ENCODE measurements at regions of chr3 and their contacts with region 1.

Region 1: DNA sequence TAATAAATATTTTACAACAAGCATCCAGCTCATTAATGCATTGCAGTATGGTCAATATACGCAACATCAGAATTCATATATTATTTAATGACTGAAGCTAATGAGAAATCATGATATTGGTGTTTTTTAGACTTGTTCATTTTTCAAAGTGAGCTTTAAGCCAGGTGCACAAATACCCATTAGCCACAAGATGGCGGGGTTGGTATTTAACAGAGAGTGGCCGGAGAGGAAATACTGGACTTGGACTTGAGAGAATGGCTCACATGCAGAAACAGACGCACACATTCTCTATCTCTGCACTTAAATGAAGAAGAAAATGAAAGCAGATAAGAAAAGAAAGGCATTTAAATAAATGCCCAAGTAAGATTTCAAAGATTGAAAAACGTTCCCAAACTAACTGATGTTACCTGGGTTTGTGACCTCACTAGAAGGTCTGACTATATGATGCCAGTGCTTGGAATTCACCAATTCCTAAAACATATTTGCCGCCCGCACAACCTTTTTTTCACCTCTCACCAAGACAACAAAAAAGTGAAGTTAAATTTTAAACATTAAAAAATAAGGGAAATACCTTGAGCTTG is 21.2 kb upstream of the CRBN start:
- DNase-seq: peak in 5 of 14 experiments; percentile 10 to 64 (median 44)
- ATAC-seq: no peak
- H3K4me3 ChIP-seq: no peak overlapping the region
- H3K4me3 Mint-ChIP-seq: no peak overlapping the region
- H3K27ac ChIP-seq: no peak overlapping the region
- H3K27ac Mint-ChIP-seq: no peak overlapping the region
- H3K4me1 ChIP-seq: peaks cover 12% of the 10 kb centered on the region
- H3K4me1 Mint-ChIP-seq: peaks cover 20% of the 10 kb centered on the region
- H3K27me3 ChIP-seq: no peaks in the 10 kb centered on the region
- H3K27me3 Mint-ChIP-seq: no peaks in the 10 kb centered on the region
- CTCF ChIP-seq: peak; percentile 87

Region 2: DNA sequence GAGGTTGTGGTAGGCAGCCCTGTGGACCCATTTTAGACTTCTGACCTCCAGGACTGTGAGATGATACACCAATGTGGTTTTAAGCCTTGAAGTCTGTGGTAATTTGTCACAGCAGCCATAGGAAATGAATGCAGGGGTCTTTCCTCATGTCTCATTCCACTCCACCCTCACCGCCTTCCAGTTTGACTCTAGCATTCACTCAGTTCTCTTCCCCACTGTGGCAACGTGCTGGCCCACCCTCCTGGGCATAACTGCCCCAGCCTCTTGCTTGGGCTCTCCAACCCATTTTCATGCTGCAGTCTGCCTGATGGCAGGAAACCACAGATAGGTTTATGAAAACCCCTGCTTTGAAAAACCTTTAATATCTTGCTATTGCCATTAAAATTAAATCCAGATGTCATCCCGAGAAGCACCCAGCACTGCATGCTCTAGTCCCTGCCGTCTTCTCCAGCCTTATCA is 81.3 kb before region 1 on chr3:
- CTCF ChIA-PET with region 1: no interaction called
- POLR2A ChIA-PET with region 1: no interaction called
- intact Hi-C with region 1: no loop called
- DNase-seq: no peak
- ATAC-seq: no peak
- H3K4me3 ChIP-seq: no peak overlapping the region
- H3K4me3 Mint-ChIP-seq: no peak overlapping the region
- H3K27ac ChIP-seq: no peak overlapping the region
- H3K27ac Mint-ChIP-seq: no peak overlapping the region
- H3K4me1 ChIP-seq: no peaks in the 10 kb centered on the region
- H3K4me1 Mint-ChIP-seq: no peaks in the 10 kb centered on the region
- H3K27me3 ChIP-seq: no peaks in the 10 kb centered on the region
- H3K27me3 Mint-ChIP-seq: no peaks in the 10 kb centered on the region
- CTCF ChIP-seq: no peak

Region 3: GRCh38 chr3:3998140-3998922 is 797.6 kb after region 1 on chr3:
- CTCF ChIA-PET with region 1: no interaction called
- POLR2A ChIA-PET with region 1: interaction called, 4 read pairs
- intact Hi-C with region 1: loop called in 1 of 2 experiments (anchors 5 kb)
- DNase-seq: peak in 4 of 14 experiments; percentile 1 to 36 (median 23)
- ATAC-seq: no peak
- H3K4me3 ChIP-seq: no peak overlapping the region
- H3K4me3 Mint-ChIP-seq: no peak overlapping the region
- H3K27ac ChIP-seq: no peak overlapping the region
- H3K27ac Mint-ChIP-seq: no peak overlapping the region
- H3K4me1 ChIP-seq: no peaks in the 10 kb centered on the region
- H3K4me1 Mint-ChIP-seq: no peaks in the 10 kb centered on the region
- H3K27me3 ChIP-seq: no peaks in the 10 kb centered on the region
- H3K27me3 Mint-ChIP-seq: no peaks in the 10 kb centered on the region
- CTCF ChIP-seq: peak; percentile 34

Region 4: GRCh38 chr3:4271834-4272233 is 1071.1 kb after region 1 on chr3:
- CTCF ChIA-PET with region 1: interaction called, 3 read pairs
- POLR2A ChIA-PET with region 1: interaction called, 3 read pairs
- intact Hi-C with region 1: loop called in 1 of 2 experiments (anchors 5 kb)
- DNase-seq: peak in 3 of 14 experiments; percentile 14 to 22 (median 18)
- ATAC-seq: no peak
- H3K4me3 ChIP-seq: no peak overlapping the region
- H3K4me3 Mint-ChIP-seq: no peak overlapping the region
- H3K27ac ChIP-seq: no peak overlapping the region
- H3K27ac Mint-ChIP-seq: no peak overlapping the region
- H3K4me1 ChIP-seq: no peaks in the 10 kb centered on the region
- H3K4me1 Mint-ChIP-seq: peaks cover 17% of the 10 kb centered on the region
- H3K27me3 ChIP-seq: no peaks in the 10 kb centered on the region
- H3K27me3 Mint-ChIP-seq: no peaks in the 10 kb centered on the region
- CTCF ChIP-seq: peak; percentile 38

Region 5: GRCh38 chr3:4290272-4290893 is 1089.7 kb after region 1 on chr3:
- CTCF ChIA-PET with region 1: interaction called, 4 read pairs
- POLR2A ChIA-PET with region 1: interaction called, 3 read pairs
- intact Hi-C with region 1: loop called (anchors 1 to 5 kb)
- DNase-seq: peak in 10 of 14 experiments; percentile 2 to 70 (median 12)
- ATAC-seq: peak; percentile 71
- H3K4me3 ChIP-seq: no peak overlapping the region
- H3K4me3 Mint-ChIP-seq: no peak overlapping the region
- H3K27ac ChIP-seq: no peak overlapping the region
- H3K27ac Mint-ChIP-seq: no peak overlapping the region
- H3K4me1 ChIP-seq: no peaks in the 10 kb centered on the region
- H3K4me1 Mint-ChIP-seq: peaks cover 21% of the 10 kb centered on the region
- H3K27me3 ChIP-seq: no peaks in the 10 kb centered on the region
- H3K27me3 Mint-ChIP-seq: peaks cover 4% of the 10 kb centered on the region
- CTCF ChIP-seq: peak; percentile 95